HCT116 (cell line): ENCODE measurements at regions of chr6 and their contacts with region 1.

Region 1: GRCh38 chr6:132300323-132300949 is 100.8 kb downstream of the MOXD1 start:
- DNase-seq: peak; percentile 40
- ATAC-seq: peak; percentile 91
- H3K4me3 ChIP-seq: no peak overlapping the region
- H3K27ac ChIP-seq: no peak overlapping the region
- H3K4me1 ChIP-seq: no peaks in the 10 kb centered on the region
- H3K27me3 ChIP-seq: no peaks in the 10 kb centered on the region
- CTCF ChIP-seq: peak; percentile 47 to 80 (median 70); a peak in 5 of 6 replicates
- POLR2A ChIP-seq: no peak
- RAD21 ChIP-seq: peak; percentile 87

Region 2: DNA sequence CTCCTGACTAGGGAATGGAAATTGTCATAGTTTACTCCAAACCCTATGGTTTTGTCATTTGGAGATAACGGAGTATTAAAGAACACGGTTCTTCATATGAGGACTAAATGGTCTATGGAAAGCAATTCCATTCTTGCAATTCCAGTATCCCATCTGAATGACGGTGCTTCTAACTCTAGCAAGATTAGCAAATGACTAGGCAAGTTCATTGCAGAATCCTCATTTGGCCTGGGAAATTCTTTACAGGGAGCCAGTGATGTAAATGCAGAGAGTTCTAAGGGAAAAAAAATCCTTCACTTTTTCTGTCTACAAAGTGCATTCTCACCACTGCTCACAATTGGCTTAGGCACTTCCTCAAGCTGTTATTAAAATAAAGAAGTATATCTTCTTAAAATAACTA is 10.7 kb before region 1 on chr6:
- CTCF ChIA-PET with region 1: interaction called, 12 read pairs
- POLR2A ChIA-PET with region 1: no interaction called
- RAD21 ChIA-PET with region 1: no interaction called
- intact Hi-C with region 1: no loop called
- DNase-seq: no peak
- ATAC-seq: no peak
- H3K4me3 ChIP-seq: no peak overlapping the region
- H3K27ac ChIP-seq: no peak overlapping the region
- H3K4me1 ChIP-seq: no peaks in the 10 kb centered on the region
- H3K27me3 ChIP-seq: no peaks in the 10 kb centered on the region
- CTCF ChIP-seq: no peak
- POLR2A ChIP-seq: no peak
- RAD21 ChIP-seq: no peak

Region 3: GRCh38 chr6:132391391-132392271 is 91.2 kb after region 1 on chr6:
- CTCF ChIA-PET with region 1: interaction called, 10 read pairs
- POLR2A ChIA-PET with region 1: no interaction called
- RAD21 ChIA-PET with region 1: no interaction called
- intact Hi-C with region 1: loop called (anchors 2 kb)
- DNase-seq: no peak
- ATAC-seq: no peak
- H3K4me3 ChIP-seq: no peak overlapping the region
- H3K27ac ChIP-seq: no peak overlapping the region
- H3K4me1 ChIP-seq: no peaks in the 10 kb centered on the region
- H3K27me3 ChIP-seq: no peaks in the 10 kb centered on the region
- CTCF ChIP-seq: no peak
- POLR2A ChIP-seq: no peak
- RAD21 ChIP-seq: no peak

Region 4: DNA sequence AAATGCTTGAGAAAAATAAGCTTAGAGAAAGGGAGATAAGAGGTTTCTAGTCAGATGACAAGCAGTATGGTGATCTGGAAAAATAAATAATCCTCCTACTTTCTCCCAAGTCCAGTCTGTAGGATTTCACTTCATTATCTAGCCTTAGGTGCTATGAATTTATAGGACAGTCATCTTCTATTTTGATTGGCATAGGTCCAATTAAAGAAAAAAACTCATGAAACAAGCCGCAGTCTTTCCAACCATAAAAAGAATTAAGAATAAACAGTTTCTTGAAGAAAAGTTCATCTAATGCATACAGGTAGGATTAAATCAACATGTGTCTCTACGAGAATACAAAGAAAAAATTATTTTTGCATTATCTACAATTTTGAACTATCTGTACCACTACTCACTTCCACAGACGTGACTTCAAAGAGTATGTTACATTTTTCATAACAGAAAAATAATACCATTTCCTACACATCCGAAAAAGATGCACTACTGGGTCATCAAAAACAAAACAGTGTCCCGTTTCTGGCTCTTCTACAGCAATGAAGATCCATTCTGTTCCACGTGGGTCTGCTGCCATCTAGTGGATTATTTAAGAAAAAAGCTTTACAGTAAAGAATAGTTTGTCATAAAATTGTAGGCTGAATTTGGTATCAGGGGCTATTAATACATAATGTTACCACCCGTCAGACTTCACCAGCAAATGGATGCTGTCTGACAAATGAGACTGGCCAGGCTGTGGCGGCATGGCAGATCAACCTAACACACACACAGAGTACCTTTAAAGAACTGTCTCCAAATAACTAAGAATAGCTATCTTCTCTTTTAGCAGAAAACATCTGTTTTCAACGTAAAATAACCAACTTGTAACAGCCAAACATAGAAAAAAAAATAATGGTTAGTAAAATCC is 183.6 kb after region 1 on chr6:
- CTCF ChIA-PET with region 1: interaction called, 36 read pairs
- POLR2A ChIA-PET with region 1: no interaction called
- RAD21 ChIA-PET with region 1: interaction called, 3 to 4 read pairs
- intact Hi-C with region 1: loop called (anchors 1 kb)
- DNase-seq: peak; percentile 47
- ATAC-seq: peak; percentile 76
- H3K4me3 ChIP-seq: no peak overlapping the region
- H3K27ac ChIP-seq: no peak overlapping the region
- H3K4me1 ChIP-seq: no peaks in the 10 kb centered on the region
- H3K27me3 ChIP-seq: no peaks in the 10 kb centered on the region
- CTCF ChIP-seq: peak; percentile 47 to 86 (median 80)
- POLR2A ChIP-seq: no peak
- RAD21 ChIP-seq: peak; percentile 82

Region 5: GRCh38 chr6:132768051-132768517 is 467.6 kb after region 1 on chr6:
- CTCF ChIA-PET with region 1: no interaction called
- POLR2A ChIA-PET with region 1: no interaction called
- RAD21 ChIA-PET with region 1: no interaction called
- intact Hi-C with region 1: loop called (anchors 5 kb)
- DNase-seq: peak; percentile 40
- ATAC-seq: peak; percentile 97
- H3K4me3 ChIP-seq: no peak overlapping the region
- H3K27ac ChIP-seq: no peak overlapping the region
- H3K4me1 ChIP-seq: peaks cover 0 to 5% of the 10 kb centered on the region in 2 experiments; a peak in 2 of 4 replicates
- H3K27me3 ChIP-seq: no peaks in the 10 kb centered on the region
- CTCF ChIP-seq: peak; percentile 63 to 94 (median 73)
- POLR2A ChIP-seq: no peak
- RAD21 ChIP-seq: peak; percentile 67

Region 6: DNA sequence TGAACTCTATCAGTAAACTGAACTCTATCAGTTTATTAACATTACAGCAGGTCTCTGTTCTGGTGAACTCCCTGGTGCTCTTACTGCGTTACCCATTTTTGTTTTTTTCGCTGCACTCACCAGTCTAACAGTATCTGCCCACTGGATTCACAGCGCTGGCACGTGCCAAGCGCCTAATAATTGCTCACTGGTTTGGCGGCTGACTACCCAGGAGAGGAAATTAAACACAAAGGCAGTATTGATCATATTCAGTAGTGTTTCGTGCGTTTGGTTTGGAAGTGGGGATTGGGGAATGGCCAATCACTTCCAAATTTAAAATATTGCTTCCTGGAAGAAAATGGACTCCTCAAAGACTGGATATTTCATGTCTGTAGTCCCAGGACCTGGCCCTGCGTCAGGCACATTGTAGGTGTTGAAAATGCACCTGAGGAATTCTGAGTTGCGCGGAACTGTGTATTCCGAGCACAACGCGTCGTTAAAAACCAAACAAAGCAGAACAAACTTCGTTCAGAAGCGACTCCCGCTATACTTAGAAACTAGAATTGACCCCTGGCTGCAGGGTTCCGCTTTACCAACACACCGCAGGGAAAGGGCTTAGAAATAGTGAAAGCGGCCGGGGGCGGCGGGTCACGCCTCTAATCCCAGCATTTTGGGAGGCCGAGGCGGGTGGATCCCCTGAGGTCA is 512.9 kb after region 1 on chr6:
- CTCF ChIA-PET with region 1: no interaction called
- POLR2A ChIA-PET with region 1: no interaction called
- RAD21 ChIA-PET with region 1: no interaction called
- intact Hi-C with region 1: no loop called
- DNase-seq: no peak
- ATAC-seq: peak; percentile 33
- H3K4me3 ChIP-seq: peak overlapping the region; percentile 94 to 95
- H3K27ac ChIP-seq: peak overlapping the region; percentile 93
- H3K4me1 ChIP-seq: peaks cover 9 to 51% of the 10 kb centered on the region in 2 experiments
- H3K27me3 ChIP-seq: no peaks in the 10 kb centered on the region
- CTCF ChIP-seq: no peak
- POLR2A ChIP-seq: no peak
- RAD21 ChIP-seq: no peak